Lower leg skin (tissue), 4 donors: ENCODE measurements at regions of chr18 and their contacts with region 1.

Region 1: DNA sequence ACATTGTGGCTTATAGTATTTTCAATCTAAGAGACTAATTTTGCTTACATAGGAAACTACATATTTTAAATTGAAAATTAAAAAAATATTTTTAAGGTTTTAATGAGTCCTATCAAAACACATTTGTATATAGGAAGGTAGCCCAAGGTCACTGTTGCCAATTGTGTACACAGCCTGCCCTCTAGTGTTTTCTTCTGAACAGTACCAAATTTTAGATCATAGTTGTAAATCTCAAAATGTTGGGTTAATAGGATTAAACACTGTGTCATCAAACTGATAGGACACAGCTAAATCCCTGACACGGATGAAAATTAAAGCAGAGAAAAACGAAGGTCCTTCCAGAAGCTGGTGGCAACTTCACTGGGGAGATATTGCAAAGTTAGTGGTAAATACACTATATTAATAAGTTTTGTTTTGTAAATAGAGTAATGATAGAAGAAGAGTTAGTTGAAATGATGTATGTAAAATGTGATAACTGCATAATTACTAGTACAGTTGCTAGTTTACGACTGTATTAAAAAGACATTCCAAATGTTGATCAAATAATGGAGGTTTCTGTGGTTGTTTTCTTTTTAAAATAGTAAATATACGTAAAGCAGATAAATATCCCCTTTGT is 19.7 kb downstream of the CLUL1 start:
- DNase-seq: no peak
- H3K4me3 ChIP-seq: no peak overlapping the region
- CTCF ChIP-seq: no peak
- POLR2A ChIP-seq: no peak

Region 2: DNA sequence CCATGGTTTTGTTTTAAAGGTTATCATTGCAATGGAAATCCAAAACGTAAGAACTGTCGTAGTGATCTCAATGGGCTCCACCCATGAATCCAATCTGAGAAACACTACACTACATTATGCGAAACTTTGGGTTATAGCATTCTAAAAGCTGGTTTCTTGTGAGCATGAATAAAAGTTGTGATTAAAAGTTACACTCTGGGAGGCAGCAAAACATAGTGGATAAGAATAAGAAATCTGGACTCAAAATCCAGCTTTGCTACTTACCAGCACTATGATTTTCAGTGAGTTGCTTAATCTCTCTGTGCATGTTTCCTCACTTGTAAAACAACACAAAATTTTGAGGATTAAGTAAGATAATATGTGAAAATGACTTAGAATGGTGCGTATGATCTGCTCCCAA is 323.0 kb before region 1 on chr18:
- intact Hi-C with region 1: loop called (anchors 10 kb)
- DNase-seq: no peak
- H3K4me3 ChIP-seq: no peak overlapping the region
- CTCF ChIP-seq: no peak
- POLR2A ChIP-seq: no peak

Region 3: DNA sequence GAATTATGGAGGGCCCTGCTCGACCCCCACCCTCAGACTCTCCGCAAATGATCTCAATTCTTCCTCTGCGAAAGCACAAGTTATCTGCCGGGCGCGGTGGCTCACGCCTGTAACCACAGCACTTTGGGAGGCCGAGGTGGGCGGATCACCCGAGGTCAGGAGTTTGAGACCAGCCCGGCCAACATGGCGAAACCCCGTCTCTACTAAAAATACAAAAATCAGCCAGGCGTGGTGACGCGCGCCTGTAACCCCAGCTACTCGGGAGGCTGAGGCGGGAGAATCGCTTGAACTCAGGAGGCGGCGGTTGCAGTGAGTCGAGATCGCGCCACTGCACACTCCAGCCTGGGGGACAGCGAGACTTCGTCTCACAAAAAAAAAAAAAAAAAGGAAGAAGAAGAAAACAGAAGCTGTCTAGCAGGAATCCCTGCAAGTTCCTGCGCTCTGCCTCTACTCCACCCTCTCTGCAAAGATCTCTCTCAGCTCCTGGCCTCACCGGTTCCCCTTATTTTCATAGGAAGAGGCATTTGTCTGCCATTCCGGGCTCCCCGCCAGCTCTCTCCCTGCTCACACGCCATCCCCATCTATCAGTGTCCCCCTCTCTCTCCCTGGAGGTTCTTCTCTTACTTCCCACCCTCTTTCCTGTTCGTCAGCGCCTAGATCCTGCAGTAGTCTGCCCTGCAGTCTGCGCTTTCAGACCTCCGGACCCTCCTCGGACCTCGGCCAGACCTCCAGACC is 102.5 kb before region 1 on chr18:
- intact Hi-C with region 1: no loop called
- DNase-seq: no peak
- H3K4me3 ChIP-seq: no peak overlapping the region
- CTCF ChIP-seq: no peak
- POLR2A ChIP-seq: no peak

Region 4: GRCh38 chr18:634551-635045 is 18.1 kb after region 1 on chr18:
- intact Hi-C with region 1: no loop called
- DNase-seq: no peak
- H3K4me3 ChIP-seq: no peak overlapping the region
- CTCF ChIP-seq: no peak
- POLR2A ChIP-seq: no peak

Region 5: DNA sequence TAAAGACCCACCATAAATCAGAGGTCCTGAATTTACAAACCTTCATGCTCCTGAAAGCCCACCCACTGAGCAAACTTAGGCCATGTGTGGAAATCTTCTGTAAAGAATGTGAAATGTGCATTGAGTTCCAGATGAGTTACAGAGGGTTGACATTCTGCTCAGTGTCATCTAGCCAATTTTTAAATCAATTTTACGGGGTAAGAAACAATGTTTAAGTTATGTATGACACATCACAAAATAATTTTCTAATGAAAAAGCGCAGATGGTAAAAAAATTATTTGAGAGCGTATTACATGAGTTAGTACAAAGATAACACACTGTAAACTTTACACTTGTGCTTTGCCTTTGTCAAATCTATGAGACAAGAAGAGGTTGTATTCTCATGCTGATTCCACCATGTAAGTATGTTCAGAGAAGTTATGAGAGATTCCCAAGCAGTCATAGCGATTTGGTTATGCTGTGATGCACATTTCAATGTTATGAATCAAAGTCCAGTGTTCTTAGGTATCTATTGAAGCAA is 734.5 kb after region 1 on chr18:
- intact Hi-C with region 1: no loop called
- DNase-seq: no peak
- H3K4me3 ChIP-seq: no peak overlapping the region
- CTCF ChIP-seq: no peak
- POLR2A ChIP-seq: no peak